ENCODE measurements at regions of chr19 and their contacts with region 1.

Region 1: GRCh38 chr19:34232566-34233481 is 21.5 kb upstream of the GARRE1 start:
- DNase-seq: peak in 6 of 10 donors; percentile 35 to 73 (median 50)

Region 2: GRCh38 chr19:34345947-34346351 is 113.1 kb after region 1 on chr19:
- intact Hi-C with region 1: loop called (anchors 10 kb)
- DNase-seq: peak; percentile 55 to 96 (median 83)